ENCODE measurements at regions of chr4 and their contacts with region 1.

Region 1: DNA sequence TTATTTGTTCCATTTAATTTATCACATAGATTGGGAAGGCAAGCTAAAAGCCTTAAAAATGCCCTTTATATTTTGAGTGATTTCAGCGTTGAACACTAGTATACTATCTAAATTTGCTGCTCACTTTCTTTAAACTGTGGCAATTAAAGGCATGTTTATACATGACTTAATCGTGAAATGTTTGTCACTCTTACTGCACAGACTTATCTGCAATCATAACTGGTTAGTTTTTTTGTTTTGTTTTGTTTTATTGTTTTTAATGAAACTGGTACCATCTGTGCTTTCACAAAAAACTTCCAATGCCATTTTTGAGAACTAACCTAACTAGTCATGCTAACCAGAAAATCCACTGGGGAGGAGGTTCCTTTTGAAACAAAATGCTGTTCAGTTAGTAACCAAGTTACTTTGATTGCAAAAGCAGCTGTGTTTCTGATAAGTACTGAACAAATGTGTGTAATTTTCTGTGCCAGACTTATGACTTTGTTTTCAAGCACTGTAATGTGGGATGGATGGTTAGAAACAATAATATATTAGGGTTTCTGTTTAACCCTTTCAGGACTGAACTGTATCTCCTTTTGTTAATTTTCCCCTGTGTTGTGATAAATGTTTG is 56.1 kb downstream of the CCKAR start:
- DNase-seq: no peak
- H3K4me3 ChIP-seq: no peak overlapping the region
- H3K27ac ChIP-seq: no peak overlapping the region
- H3K4me1 ChIP-seq: no peaks in the 10 kb centered on the region
- H3K27me3 ChIP-seq: no peaks in the 10 kb centered on the region
- CTCF ChIP-seq: no peak

Region 2: GRCh38 chr4:26197018-26197779 is 236.9 kb before region 1 on chr4:
- CTCF ChIA-PET with region 1: no interaction called
- POLR2A ChIA-PET with region 1: no interaction called
- intact Hi-C with region 1: no loop called
- DNase-seq: no peak
- H3K4me3 ChIP-seq: no peak overlapping the region
- H3K27ac ChIP-seq: no peak overlapping the region
- H3K4me1 ChIP-seq: no peaks in the 10 kb centered on the region
- H3K27me3 ChIP-seq: peaks cover 37% of the 10 kb centered on the region
- CTCF ChIP-seq: no peak

Region 3: DNA sequence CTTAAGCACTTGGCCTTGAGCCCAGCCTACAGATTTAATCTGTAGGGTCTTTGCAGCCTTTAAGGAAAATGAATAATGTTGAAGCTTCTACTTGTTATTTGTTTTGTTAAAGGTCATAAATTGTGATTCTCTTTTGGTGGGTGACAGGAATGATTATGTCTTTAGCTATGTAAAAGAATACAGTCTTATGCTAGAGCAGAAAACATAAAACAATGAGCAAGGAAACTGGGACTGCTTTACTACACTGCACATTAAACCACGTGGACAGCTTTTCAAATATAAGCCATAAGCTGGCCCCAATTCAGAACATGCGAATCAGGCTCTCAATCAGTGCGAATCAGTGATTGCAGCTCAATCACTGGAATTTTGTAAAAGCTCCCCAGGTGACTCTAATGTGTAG is 108.9 kb after region 1 on chr4:
- CTCF ChIA-PET with region 1: interaction called, 12 read pairs
- POLR2A ChIA-PET with region 1: no interaction called
- intact Hi-C with region 1: no loop called
- DNase-seq: peak; percentile 59
- H3K4me3 ChIP-seq: no peak overlapping the region
- H3K27ac ChIP-seq: no peak overlapping the region
- H3K4me1 ChIP-seq: peaks cover 5% of the 10 kb centered on the region
- H3K27me3 ChIP-seq: no peaks in the 10 kb centered on the region
- CTCF ChIP-seq: no peak

Measured in A673 (cell line).